ENCODE measurements at regions of chr16 and their contacts with region 1.

Region 1: DNA sequence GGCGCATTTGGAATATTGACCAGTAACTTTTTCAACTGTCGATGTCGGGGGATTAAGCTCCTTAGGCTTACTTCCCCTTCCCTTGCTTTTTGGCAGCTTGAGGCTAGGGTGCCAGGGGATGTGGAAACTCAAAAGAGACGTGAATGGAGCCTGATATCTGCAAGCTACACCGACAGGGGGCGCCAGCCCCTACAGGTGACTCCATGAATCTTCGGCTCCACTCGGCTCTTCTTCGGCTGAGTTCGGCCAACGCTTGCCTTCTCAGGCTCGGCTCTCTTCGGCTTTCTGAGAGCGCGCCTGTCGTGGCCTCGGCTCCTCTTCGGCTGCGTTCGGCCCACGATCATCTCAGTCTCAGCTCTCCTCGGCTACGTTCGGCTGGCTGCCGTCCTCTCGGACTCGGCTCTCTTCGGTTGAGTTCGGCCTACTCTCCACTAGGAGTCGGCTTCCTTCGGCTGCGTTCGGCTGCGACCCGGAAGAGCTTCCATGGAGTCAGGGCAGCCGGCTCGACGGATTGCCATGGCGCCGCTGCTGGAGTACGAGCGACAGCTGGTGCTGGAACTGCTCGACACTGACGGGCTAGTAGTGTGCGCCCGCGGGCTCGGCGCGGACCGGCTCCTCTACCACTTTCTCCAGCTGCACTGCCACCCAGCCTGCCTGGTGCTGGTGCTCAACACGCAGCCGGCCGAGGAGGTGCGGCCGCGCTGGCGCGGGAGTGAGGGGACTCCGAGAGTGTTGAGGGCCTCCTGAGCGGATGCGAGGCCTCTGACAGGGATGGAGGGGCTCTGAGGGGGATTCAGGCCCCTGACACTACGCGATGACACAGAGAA is at the start of gene ERCC4:
- DNase-seq: peak; percentile 98 to 100 (median 100)
- ATAC-seq: peak; percentile 95 to 98 (median 98)
- H3K4me3 ChIP-seq: peak within 1 kb of the TSS; percentile 77 to 83
- H3K4me3 Mint-ChIP-seq: peak within 1 kb of the TSS; percentile 87 to 96 (median 92)
- H3K27ac ChIP-seq: peak within 1 kb of the TSS; percentile 64
- H3K27ac Mint-ChIP-seq: peak within 1 kb of the TSS; percentile 89 to 90
- H3K4me1 ChIP-seq: peaks cover 4 to 17% of the 10 kb centered on the region in 2 experiments
- H3K4me1 Mint-ChIP-seq: peaks cover 26 to 29% (median 26%) of the 10 kb centered on the region in 3 donors
- H3K27me3 ChIP-seq: peaks cover 0 to 2% of the 10 kb centered on the region in 2 experiments
- H3K27me3 Mint-ChIP-seq: no peaks in the 10 kb centered on the region
- total RNA-seq, gene ERCC4: 11.6 to 13.7 (median 13.3) TPM

Region 2: DNA sequence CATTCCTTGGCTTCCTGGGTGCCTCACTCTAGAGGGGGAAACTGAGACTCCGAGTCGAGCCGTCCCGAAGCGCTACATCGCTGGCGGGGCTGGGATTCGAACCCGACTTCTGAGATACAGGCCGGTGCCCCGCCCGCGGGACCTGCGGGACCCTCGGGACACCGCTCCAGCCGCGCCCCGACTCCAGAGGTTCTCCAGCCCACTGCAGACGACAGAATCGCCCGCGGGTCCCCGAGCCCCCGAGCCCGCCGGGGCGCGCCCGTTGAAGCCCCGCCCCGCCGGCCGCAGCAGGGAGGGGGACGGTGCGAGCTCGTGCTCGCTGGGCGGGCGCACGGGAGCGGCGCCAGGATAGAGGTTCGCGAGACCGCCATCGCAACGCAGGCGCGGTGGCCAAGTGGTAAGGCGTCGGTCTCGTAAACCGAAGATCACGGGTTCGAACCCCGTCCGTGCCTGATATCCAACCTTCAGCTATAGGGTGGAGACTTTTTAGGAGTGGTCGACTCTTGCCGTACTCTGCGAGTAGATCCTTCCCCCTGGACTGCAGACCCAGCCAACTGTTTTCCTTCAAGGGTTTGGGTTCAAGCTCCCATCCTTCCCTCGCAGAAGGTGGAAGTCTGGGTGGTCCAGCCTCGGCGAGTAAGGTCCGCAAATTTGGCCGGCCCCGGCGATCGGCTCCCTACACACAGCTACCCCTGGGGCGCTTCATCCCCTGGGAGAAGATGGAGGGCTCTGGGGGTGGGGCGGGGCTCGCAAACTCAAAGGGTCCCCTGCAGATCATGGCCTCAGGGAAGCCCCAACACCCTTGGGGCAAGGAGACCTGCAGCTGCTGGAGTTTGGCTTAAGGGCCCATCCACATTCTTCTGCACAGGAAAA is 365.9 kb after region 1 on chr16:
- CTCF ChIA-PET with region 1: interaction called in 1 of 2 experiments, 10 read pairs
- POLR2A ChIA-PET with region 1: interaction called in 1 of 2 experiments, 3 read pairs
- DNase-seq: peak; percentile 84 to 98 (median 93)
- ATAC-seq: peak; percentile 81 to 87 (median 84)
- H3K4me3 ChIP-seq: peak overlapping the region; percentile 91 to 96
- H3K4me3 Mint-ChIP-seq: peak overlapping the region; percentile 89 to 93 (median 92)
- H3K27ac ChIP-seq: peak overlapping the region; percentile 63
- H3K27ac Mint-ChIP-seq: peak overlapping the region; percentile 89 to 94
- H3K4me1 ChIP-seq: peaks cover 0 to 21% of the 10 kb centered on the region in 2 experiments
- H3K4me1 Mint-ChIP-seq: peaks cover 16 to 24% (median 23%) of the 10 kb centered on the region in 3 donors
- H3K27me3 ChIP-seq: no peaks in the 10 kb centered on the region
- H3K27me3 Mint-ChIP-seq: no peaks in the 10 kb centered on the region